Thyroid gland (tissue), 4 donors: ENCODE measurements at regions of chr6 and their contacts with region 1.

Region 1: DNA sequence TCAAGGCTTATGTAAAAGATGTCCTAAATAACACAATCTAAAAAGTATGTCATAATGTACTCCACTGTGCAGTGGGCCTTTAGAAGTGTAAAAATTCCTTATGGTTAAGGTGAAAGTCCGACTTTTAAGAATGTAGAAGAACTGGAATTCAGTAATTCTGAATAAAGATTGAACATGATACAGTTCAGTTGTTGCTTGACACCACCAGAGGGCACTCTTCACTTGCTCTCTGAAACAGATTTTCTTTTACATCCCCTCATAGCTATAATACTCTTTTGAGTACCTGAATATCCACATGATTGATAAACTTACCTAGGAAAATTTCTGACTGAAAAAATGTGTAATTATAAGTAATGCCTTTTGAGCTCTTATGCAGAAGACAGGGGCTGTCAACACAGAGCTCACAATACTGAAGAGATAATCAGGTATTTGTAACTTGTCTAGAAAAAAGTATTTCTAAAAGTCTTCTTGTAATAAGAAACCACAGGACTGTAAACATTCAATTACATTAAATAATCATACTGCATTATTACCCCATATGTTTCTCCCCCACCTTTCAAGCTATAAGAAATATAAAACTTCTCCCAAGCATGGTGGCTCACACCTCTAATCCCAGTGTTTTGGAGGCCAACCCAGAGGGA is 92.1 kb downstream of the POPDC3 start:
- DNase-seq: peak; percentile 36 to 37
- H3K4me3 ChIP-seq: no peak overlapping the region
- H3K27ac ChIP-seq: no peak overlapping the region
- H3K4me1 ChIP-seq: no peaks in the 10 kb centered on the region
- H3K27me3 ChIP-seq: no peaks in the 10 kb centered on the region
- CTCF ChIP-seq: peak; percentile 72 to 93 (median 82)
- POLR2A ChIP-seq: no peak

Region 2: DNA sequence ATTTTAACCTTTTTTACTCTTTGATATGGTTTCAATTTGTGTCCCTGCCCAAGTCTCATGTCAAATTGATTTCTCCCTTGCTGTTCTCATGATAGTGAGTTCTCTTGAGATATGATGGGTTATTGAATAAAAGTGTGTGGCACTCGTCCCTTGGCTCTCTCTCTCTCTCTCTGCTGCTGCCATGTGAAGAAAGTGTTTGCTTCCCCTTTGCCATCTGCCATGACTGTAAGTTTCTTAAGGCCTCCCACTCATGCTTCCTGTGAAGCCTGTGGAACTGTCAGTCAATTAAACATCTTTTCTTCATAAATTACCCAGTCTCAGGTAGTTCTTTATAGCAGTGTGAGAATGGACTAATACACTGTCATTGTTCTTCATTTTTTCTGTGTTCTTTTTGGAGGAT is 82.2 kb before region 1 on chr6:
- intact Hi-C with region 1: no loop called
- DNase-seq: no peak
- H3K4me3 ChIP-seq: no peak overlapping the region
- H3K27ac ChIP-seq: no peak overlapping the region
- H3K4me1 ChIP-seq: peaks cover 15 to 16% of the 10 kb centered on the region in 2 donors
- H3K27me3 ChIP-seq: no peaks in the 10 kb centered on the region
- CTCF ChIP-seq: no peak
- POLR2A ChIP-seq: no peak

Region 3: DNA sequence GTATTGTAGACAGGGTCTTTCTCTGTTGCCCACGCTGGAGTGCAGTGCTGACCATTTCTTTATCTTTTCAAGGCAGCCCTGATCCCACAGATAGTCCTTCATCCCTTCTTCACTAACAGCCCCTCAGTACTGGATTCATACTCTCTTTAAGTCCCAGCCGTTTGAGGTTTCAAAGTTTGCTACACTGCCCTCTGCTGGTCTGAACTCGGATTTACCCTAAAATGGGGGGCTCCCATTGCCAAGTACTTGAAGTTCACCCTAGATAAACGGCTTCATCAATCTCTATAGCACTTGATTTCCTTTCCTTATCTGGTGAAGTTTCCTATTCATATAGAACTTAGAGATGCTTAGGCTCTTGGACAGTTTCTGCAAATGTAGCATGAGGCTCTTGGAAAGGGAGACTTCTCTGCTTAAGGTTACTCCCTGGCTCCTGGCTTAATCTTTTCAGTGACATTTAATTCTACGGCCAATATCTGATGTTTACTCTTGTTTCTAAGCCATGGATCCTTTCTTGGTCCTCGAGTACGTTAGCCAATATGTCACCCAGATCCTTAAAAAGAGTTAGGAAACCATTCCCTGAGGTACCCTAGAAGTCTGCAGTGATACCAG is 336.6 kb after region 1 on chr6:
- intact Hi-C with region 1: loop called (anchors 5 kb)
- DNase-seq: peak; percentile 29 to 50
- H3K4me3 ChIP-seq: no peak overlapping the region
- H3K27ac ChIP-seq: no peak overlapping the region
- H3K4me1 ChIP-seq: peaks cover 11 to 16% of the 10 kb centered on the region in 2 donors
- H3K27me3 ChIP-seq: no peaks in the 10 kb centered on the region
- CTCF ChIP-seq: peak; percentile 25 to 70 (median 52)
- POLR2A ChIP-seq: no peak

Region 4: GRCh38 chr6:105495515-105495914 is 407.8 kb after region 1 on chr6:
- intact Hi-C with region 1: no loop called
- DNase-seq: no peak
- H3K4me3 ChIP-seq: no peak overlapping the region
- H3K27ac ChIP-seq: no peak overlapping the region
- H3K4me1 ChIP-seq: peaks cover 17 to 35% of the 10 kb centered on the region in 2 donors
- H3K27me3 ChIP-seq: no peaks in the 10 kb centered on the region
- CTCF ChIP-seq: no peak
- POLR2A ChIP-seq: no peak